Sigmoid colon (tissue), 7 donors: ENCODE measurements at regions of chr14 and their contacts with region 1.

Region 1: GRCh38 chr14:26598081-26598795 is 405 bp upstream of the NOVA1 start:
- DNase-seq: peak; percentile 97
- H3K4me3 ChIP-seq: peak overlapping the region; percentile 73 to 88 (median 85)
- H3K27ac ChIP-seq: peak overlapping the region; percentile 89 to 96 (median 94)
- H3K4me1 ChIP-seq: peaks cover 0 to 31% (median 4%) of the 10 kb centered on the region in 4 donors
- H3K27me3 ChIP-seq: no peaks in the 10 kb centered on the region
- CTCF ChIP-seq: no peak
- EP300 ChIP-seq: peak in 1 of 4 donors; percentile 1
- POLR2A ChIP-seq: no peak

Region 2: DNA sequence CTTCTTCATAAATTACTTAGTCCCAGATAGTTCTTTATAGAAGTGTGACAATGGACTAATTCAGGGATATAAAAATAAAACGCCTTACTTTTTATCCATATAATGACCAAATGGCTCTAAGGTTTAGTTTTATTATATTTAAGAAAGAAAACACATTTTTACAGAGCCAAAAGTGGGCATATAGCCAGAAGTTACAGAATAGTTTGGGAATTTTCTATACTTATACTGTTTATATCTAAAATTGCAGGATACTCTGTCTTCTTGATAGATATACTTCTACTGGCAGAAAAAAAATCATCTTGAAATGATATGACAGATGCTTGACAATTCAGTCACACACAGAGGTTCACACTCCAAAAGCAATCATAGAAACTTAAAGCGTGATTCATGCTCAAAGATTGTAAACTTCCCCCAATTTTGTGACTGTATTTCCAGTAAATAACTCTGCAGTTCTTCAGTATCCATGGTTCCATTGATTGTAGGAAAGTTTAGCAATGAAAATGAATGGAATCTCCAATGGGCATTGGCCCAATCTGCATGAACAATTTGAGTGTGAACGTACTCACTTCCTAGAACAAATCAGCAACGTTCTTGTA is 308.2 kb before region 1 on chr14:
- intact Hi-C with region 1: loop called (anchors 5 kb)
- DNase-seq: no peak
- H3K4me3 ChIP-seq: no peak overlapping the region
- H3K27ac ChIP-seq: no peak overlapping the region
- H3K4me1 ChIP-seq: peaks cover 0 to 26% (median 13%) of the 10 kb centered on the region in 4 donors
- H3K27me3 ChIP-seq: no peaks in the 10 kb centered on the region
- CTCF ChIP-seq: no peak
- EP300 ChIP-seq: no peak
- POLR2A ChIP-seq: no peak

Region 3: DNA sequence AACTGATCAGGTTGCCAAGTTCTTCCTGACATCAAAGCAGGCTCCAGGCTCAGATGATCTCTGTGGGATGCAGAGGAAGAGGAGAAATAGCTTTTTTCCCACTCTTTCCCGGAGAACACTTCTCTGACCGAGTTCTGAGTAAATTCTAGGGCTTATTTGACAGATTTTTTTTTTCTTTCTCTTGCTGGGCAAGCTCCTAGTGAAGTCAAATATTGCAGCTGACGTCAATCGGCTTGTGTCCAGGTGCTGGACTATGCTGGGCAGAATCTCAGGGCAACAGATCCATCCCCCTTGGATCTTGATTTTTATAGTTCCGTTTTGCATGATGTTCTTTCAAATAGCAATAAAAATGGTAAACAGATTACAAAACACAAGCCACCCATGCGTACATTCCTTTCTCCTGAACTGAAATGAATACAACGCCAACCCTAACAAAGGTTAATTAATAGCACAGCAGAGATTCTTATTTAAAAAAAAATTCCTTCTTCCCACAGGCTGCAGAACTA is 182.6 kb before region 1 on chr14:
- intact Hi-C with region 1: loop called (anchors 5 kb)
- DNase-seq: peak; percentile 94
- H3K4me3 ChIP-seq: no peak overlapping the region
- H3K27ac ChIP-seq: peak overlapping the region in 3 of 4 donors; percentile 47 to 67 (median 63)
- H3K4me1 ChIP-seq: peaks cover 0 to 43% (median 9%) of the 10 kb centered on the region in 4 donors
- H3K27me3 ChIP-seq: no peaks in the 10 kb centered on the region
- CTCF ChIP-seq: no peak
- EP300 ChIP-seq: peak; percentile 47 to 88 (median 64)
- POLR2A ChIP-seq: no peak

Region 4: DNA sequence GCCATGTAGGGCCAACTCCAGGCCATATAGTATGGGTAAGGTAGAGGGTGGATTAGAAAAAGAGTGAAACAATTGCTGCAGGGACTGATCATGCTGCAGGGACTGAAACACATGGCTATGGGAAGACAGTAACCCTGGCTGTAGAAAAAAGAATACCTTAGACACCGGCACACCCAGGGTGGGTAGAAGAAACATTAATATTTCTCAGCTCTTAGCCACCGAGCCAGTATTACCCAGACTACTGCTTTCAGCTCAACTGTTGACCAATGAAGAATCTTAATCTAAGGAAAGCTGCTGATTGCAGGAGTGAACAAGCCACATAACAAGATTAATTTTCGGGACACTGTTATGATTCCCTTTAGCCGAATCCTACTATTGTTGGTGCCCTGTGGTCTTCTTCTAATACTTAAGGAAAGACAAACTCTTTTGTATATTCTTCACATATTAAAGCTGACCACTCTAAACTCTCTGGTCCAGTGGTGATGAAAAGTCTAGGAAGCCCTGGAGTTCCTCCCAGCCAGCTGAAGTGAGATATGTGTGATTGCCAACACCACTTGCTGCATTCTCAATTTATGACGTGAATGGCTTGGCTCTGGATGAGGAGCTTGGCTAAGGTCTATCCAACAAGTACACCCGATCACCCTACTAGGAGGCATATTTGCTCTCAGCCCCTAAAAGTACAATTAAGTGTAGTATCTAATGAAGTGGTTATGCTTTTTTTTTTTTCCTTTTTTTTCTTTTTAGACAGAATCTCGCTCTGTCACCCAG is 69.6 kb before region 1 on chr14:
- intact Hi-C with region 1: loop called (anchors 10 kb)
- DNase-seq: peak; percentile 88
- H3K4me3 ChIP-seq: no peak overlapping the region
- H3K27ac ChIP-seq: peak overlapping the region in 3 of 4 donors; percentile 36 to 70 (median 50)
- H3K4me1 ChIP-seq: peaks cover 0 to 45% (median 24%) of the 10 kb centered on the region in 4 donors
- H3K27me3 ChIP-seq: no peaks in the 10 kb centered on the region
- CTCF ChIP-seq: no peak
- EP300 ChIP-seq: no peak
- POLR2A ChIP-seq: no peak

Region 5: GRCh38 chr14:26663506-26663905 is 65.3 kb after region 1 on chr14:
- intact Hi-C with region 1: loop called (anchors 5 kb)
- DNase-seq: no peak
- H3K4me3 ChIP-seq: no peak overlapping the region
- H3K27ac ChIP-seq: no peak overlapping the region
- H3K4me1 ChIP-seq: peaks cover 0 to 16% (median 2%) of the 10 kb centered on the region in 4 donors
- H3K27me3 ChIP-seq: no peaks in the 10 kb centered on the region
- CTCF ChIP-seq: no peak
- EP300 ChIP-seq: no peak
- POLR2A ChIP-seq: no peak

Region 6: GRCh38 chr14:26841920-26842741 is 243.9 kb after region 1 on chr14:
- intact Hi-C with region 1: loop called (anchors 10 kb)
- DNase-seq: peak; percentile 88
- H3K4me3 ChIP-seq: no peak overlapping the region
- H3K27ac ChIP-seq: peak overlapping the region in 3 of 4 donors; percentile 31 to 60 (median 53)
- H3K4me1 ChIP-seq: peaks cover 0 to 7% (median 0%) of the 10 kb centered on the region in 4 donors
- H3K27me3 ChIP-seq: no peaks in the 10 kb centered on the region
- CTCF ChIP-seq: no peak
- EP300 ChIP-seq: peak in 3 of 4 donors; percentile 25 to 70 (median 54)
- POLR2A ChIP-seq: no peak

Region 7: DNA sequence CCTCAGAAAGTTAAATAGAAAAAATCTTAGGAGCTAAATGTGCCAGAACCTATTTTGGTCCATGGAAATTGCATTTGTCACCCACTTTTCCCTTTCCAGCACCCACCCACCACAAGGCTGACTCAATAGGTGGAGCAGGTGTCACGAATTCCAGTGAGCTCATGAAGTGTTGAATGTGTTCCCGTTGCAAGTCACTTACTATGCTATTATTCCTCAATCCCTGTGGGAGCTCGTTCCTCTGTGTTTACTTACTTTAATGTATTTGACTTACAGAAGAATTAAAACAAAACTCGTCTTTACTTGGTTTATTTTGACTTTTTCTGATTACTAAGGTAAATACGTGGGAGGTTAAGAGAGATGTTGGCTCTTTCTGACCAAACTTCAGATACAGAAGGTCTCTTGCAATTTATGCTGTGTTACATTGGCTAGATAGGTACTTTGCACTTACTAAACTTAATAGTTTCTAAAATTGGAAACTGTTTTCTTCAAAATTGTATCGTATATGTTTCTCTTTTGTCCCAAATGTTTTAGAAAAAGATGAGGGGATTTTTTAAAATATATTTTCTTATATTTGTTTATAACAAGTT is 269.0 kb after region 1 on chr14:
- intact Hi-C with region 1: no loop called
- DNase-seq: no peak
- H3K4me3 ChIP-seq: no peak overlapping the region
- H3K27ac ChIP-seq: no peak overlapping the region
- H3K4me1 ChIP-seq: peaks cover 0 to 16% (median 11%) of the 10 kb centered on the region in 4 donors
- H3K27me3 ChIP-seq: no peaks in the 10 kb centered on the region
- CTCF ChIP-seq: no peak
- EP300 ChIP-seq: no peak
- POLR2A ChIP-seq: no peak

Region 8: GRCh38 chr14:26984311-26985177 is 386.3 kb after region 1 on chr14:
- intact Hi-C with region 1: loop called (anchors 2 kb)
- DNase-seq: peak; percentile 77
- H3K4me3 ChIP-seq: no peak overlapping the region
- H3K27ac ChIP-seq: no peak overlapping the region
- H3K4me1 ChIP-seq: no peaks in the 10 kb centered on the region
- H3K27me3 ChIP-seq: no peaks in the 10 kb centered on the region
- CTCF ChIP-seq: peak; percentile 46 to 72 (median 57)
- EP300 ChIP-seq: no peak
- POLR2A ChIP-seq: no peak